ENCODE measurements at regions of chr10 and their contacts with region 1.

Region 1: DNA sequence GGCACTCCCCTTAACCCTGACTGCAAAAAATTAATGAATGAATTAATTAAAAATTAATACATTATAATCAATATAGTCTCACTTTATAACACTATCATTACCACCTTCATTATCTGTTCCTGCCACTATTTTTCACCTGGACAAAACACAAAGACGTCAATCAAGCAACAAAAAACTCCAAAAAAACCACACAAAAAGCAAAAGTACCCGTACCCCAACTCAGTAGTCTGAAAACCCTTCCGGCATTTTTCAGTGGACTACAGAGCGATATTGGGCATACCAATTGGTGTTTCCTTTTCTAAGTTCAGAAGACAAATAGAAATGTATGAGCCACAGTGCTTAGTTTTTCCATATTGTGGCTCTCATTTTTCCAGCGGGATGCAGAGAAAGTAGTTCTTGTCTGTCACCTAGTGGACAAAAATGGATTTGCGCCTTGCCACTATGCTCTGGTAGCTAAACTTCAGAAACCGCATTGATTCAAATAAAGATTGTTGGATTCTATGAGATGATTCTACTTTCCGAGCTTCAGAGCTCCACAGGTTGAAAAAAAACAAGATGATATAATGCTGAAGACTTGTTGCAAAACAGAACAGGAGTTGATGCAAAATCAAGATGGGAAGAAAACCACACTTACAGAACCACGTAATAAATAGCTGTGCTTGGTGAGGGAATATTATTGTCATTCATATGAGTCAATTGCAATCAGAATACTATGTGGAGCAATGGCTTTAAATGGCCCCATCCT is 50.6 kb upstream of the ITGB1 start:
- DNase-seq: peak in 4 of 10 donors; percentile 40 to 71 (median 48)
- H3K4me3 ChIP-seq: peak overlapping the region in 15 of 59 donors; percentile 6 to 53 (median 30)
- H3K27ac ChIP-seq: no peak overlapping the region
- H3K27me3 ChIP-seq: peaks cover 0 to 9% (median 0%) of the 10 kb centered on the region in 45 donors
- CTCF ChIP-seq: peak; percentile 89 to 100 (median 98)

Region 2: GRCh38 chr10:32790483-32790882 is 218.2 kb before region 1 on chr10:
- intact Hi-C with region 1: loop called in 1 of 2 experiments (anchors 2 kb)
- DNase-seq: no peak
- H3K4me3 ChIP-seq: no peak overlapping the region
- H3K27ac ChIP-seq: no peak overlapping the region
- H3K27me3 ChIP-seq: no peaks in the 10 kb centered on the region
- CTCF ChIP-seq: no peak

Region 3: DNA sequence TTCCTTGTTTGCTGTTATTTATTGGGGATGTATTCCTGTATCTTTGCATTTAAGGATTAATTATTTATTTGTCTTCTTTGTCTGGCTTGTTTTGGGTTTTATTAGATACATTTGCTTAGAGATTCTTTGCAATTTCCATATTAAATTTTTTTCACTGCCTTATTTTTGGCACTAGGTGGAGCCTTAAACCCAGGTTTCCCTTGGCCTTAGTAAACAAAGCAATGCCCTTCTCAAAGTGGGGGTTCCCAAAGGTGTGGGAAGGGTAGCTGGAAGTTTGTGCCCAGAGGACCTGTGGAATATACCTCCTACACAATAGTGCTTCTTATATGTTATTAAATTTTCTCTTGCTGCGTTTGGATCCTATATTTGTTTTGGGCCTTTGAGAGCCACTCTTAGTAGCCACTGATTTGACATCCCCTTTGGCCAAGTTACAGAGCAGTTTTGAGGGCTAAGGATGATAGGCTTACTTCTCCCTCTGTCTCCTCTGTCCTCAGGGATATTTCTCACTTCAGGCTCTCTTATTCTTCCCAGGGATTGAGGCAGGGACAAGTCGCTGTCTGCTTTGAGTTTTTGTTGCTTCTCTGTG is 213.0 kb before region 1 on chr10:
- intact Hi-C with region 1: loop called (anchors 2 kb)
- DNase-seq: no peak
- H3K4me3 ChIP-seq: no peak overlapping the region
- H3K27ac ChIP-seq: no peak overlapping the region
- H3K27me3 ChIP-seq: no peaks in the 10 kb centered on the region
- CTCF ChIP-seq: peak; percentile 37 to 87 (median 70)

Region 4: GRCh38 chr10:32958085-32959005 is 50.3 kb before region 1 on chr10 and contains the start of gene ITGB1:
- intact Hi-C with region 1: loop called in 1 of 2 experiments (anchors 10 kb)
- DNase-seq: peak; percentile 85 to 97 (median 92)
- H3K4me3 ChIP-seq: peak within 1 kb of the TSS; percentile 71 to 98 (median 92)
- H3K27ac ChIP-seq: peak within 1 kb of the TSS; percentile 16 to 98 (median 91)
- H3K27me3 ChIP-seq: no peaks in the 10 kb centered on the region
- CTCF ChIP-seq: peak in 17 of 56 donors; percentile 6 to 43 (median 22)
- total RNA-seq, gene ITGB1: 45.5 to 146 (median 82.5) TPM

Measured in dorsolateral prefrontal cortex (tissue), 120 donors.